Posterior cingulate gyrus (tissue), 11 donors: ENCODE measurements at regions of chr1 and their contacts with region 1.

Region 1: DNA sequence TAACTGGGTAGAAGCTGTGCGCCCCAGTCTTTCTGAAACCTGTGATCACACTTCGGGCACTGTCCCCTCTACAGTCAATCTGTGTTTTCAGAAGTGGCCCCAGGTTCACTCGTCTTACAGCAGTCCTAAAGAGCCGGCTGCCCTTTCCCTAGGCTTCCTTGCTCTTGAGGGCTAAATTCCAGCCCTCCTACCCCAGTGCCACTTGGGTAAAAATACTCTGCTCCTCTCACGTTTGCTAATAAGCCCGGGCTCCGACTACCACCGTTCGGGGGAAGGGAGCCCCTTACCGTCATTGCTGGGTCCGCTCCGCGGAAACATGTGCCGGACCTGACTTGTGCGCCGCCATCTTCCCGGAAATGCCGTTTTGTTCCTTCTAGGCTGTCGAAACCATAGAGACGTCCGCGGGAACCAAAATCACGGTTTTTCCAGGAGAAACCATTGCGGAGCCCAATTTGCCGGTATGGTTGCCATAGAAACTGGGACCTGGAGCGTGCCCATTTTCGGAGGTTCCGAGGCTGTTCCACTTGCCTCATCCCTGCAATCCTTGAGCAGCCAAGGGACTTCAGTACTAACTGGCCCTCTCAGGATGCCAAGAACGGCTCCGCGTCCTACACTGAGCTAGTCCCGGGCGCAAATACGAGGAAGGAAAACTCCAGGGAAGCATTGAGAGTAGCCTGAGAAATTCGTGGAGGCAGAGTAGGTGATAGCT is at the start of gene GPATCH4:
- DNase-seq: peak; percentile 76 to 96 (median 82)

Region 2: DNA sequence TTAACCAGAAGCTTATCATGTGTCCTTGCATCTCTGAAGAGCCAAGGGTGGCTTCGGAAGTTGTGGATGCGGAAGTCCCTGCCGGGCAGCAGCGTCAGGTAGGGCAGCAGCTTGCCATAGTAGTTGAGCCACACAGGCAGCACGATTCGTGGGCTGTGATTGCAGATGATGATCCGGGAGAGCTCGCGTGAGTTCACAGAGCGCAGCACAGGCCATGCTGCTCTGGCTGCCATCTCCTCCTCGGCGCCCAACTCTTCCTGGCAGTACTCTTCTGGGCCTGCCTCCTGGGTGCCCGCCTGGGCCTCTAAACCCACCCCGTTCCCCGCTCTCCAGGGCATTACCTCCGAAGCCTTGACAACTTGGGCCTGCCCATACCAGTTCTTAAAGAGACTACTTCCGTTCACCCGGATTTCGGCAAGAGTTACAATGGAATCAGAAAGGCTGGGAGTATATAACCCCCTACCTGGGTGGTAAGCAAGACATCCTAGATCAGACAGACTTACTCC is 302.4 kb before region 1 on chr1 and contains the start of gene VHLL:
- intact Hi-C with region 1: no loop called
- DNase-seq: no peak

Region 3: DNA sequence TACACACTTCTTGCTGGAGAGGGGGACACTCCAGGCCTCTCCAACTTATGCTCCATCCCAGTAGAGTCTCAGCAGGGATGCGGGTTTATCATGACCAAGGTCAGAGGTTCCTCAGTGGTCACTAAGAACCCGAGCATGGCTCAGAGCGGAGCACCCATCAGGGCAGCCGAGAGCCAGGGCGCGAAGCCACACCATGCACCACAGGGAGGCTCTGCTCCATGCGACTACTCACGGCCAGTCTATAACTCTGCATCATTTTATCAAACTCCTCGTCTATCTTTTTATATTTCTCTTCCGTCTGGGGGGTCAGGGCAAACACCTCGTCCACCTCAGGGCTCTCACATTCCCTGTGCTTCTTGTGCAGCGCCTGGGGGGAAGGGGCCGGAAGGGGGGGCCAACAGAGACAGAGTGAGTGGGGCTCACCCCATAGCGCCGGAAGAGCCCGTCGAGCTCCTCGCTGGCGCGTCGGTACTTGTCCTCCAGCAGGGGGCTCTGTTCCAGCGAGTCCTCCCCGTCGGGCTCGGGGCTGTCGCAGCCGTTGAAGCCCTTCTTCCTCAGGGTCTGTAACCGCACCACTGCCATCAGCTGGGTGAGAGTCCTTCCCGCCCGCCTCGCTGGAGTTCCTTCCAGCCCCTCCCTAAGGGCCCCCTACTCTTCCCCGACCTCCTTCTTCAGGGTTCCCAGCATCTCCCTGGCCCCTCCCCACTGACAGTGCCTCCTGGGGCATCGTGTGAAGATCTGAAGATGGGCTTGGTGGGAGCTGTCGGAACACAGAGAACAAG is 120.7 kb before region 1 on chr1:
- intact Hi-C with region 1: loop called (anchors 10 kb)
- DNase-seq: peak in 4 of 10 donors; percentile 65 to 93 (median 84)

Region 4: DNA sequence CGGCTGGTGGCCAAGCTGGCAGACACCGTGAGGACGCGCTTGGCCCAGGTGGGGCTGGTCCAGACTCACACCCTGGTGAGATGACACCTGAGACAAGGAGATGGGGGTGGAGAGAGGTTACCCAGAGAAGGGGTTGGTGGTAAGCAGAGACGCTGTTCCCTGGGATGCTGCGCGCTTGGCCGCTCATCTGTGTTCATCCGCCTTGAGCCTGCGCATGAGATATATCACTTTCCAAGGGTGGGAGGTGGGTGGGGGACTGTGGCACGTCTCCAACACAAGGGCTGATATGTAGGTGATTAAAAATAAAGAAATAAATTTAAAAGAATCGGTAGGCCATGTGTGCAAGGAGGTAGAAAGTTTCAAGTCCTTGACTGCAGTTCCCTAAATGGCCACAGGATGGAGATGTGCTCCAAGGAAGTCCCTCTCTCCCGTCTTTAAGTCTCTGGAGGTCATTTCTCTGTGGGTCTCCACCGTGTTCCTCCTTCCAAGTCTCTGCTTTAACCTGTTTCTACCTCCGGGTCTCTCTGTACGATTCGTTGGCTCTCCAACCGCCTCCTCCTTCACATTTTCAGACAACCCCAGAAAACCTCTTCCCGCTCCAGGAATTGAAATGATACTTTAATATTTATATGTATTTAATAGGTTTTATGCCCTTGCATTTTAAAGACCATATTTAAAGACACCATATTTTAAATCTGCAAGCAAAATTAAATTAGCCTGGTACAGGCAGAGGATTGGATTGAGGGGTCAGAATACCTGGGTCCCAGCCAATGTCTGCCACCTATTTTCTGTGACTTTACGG is 17.3 kb before region 1 on chr1:
- intact Hi-C with region 1: loop called (anchors 2 kb)
- DNase-seq: peak in 6 of 10 donors; percentile 50 to 76 (median 70)

Region 5: DNA sequence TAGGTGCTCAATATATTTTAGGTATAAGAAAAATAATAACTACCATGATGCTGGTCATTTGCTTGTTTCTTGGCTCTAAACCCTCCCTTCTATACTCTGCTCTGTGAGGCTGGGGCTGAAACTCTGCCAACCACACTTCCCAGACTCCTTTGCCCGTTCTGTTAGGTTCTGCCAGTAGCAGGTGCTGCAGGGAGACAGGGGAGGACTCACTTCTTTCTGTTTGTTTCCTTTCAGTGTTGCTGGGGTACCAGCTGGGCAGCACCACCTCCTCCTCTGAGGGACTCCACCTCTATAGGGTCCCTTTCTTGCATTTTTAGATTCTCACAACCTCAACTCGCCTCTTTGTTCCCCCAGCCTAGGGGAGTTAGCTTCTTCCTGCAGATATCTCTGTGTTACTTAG is 232.3 kb after region 1 on chr1:
- intact Hi-C with region 1: no loop called
- DNase-seq: peak in 1 of 10 donors; percentile 30